B cell (primary cell): ENCODE measurements at regions of chr11 and their contacts with region 1.

Region 1: GRCh38 chr11:14907411-14908213 is 15.6 kb upstream of the CYP2R1 start:
- DNase-seq: peak; percentile 85
- ATAC-seq: peak; percentile 37
- H3K4me3 ChIP-seq: no peak overlapping the region
- H3K4me3 Mint-ChIP-seq: no peak overlapping the region
- H3K27ac ChIP-seq: no peak overlapping the region
- H3K27ac Mint-ChIP-seq: peak overlapping the region; percentile 70
- H3K4me1 ChIP-seq: peaks cover 32 to 44% of the 10 kb centered on the region in 2 donors
- H3K4me1 Mint-ChIP-seq: peaks cover 45% of the 10 kb centered on the region
- H3K27me3 ChIP-seq: peaks cover 0 to 4% (median 0%) of the 10 kb centered on the region in 4 experiments
- H3K27me3 Mint-ChIP-seq: peaks cover 2% of the 10 kb centered on the region
- CTCF ChIP-seq: peak; percentile 81

Region 2: DNA sequence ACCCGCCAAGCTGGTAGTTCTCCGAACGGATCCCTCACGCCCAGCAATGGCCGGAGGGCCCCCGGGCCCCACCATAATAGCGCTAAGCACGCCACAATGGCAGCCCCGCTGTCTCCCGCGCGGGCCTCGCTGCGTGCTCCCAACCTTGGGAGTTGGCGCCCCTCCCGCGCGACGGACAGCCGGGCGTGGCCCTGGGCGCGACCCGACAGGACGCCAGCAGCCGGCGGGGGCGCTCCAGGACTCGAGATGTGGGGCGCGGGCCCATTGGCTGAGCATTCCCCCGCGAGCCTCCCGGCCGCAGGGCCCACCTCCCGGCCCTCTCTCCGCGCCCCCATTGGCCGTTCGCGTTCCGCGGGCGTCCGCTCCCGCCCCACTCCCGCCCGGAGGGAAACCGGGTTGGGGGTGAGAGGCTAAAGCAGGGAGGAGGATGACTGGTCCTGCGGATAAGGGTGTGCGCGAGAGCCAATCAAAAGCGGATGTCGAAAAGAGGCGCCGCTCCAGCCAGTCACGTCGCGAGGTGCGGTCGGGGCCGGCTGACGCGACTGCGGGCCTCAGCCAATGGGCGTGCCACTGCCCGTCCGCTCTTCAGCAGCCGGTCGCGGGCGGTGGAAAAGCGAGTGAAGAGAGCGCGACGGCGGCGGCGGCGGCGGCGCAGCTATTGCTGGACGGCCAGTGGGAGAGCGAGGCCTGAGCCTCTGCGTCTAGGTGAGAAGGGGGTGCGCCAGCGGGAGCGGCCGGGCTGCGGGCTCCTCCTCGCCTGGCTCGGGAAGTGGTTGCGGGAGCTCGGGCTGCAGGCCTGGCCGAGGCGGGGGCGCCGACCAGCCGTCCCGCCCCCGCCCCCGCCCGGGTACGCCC is 1239.3 kb before region 1 on chr11 and contains the start of gene FAR1:
- CTCF ChIA-PET with region 1: no interaction called
- POLR2A ChIA-PET with region 1: no interaction called
- intact Hi-C with region 1: loop called (anchors 5 kb)
- DNase-seq: peak; percentile 98
- ATAC-seq: peak; percentile 87
- H3K4me3 ChIP-seq: peak within 1 kb of the TSS; percentile 69 to 92 (median 80)
- H3K4me3 Mint-ChIP-seq: peak within 1 kb of the TSS; percentile 96
- H3K27ac ChIP-seq: peak within 1 kb of the TSS; percentile 50 to 74
- H3K27ac Mint-ChIP-seq: peak within 1 kb of the TSS; percentile 94
- H3K4me1 ChIP-seq: peaks cover 16 to 24% of the 10 kb centered on the region in 2 donors
- H3K4me1 Mint-ChIP-seq: peaks cover 43% of the 10 kb centered on the region
- H3K27me3 ChIP-seq: peaks cover 0 to 4% (median 1%) of the 10 kb centered on the region in 4 experiments
- H3K27me3 Mint-ChIP-seq: peaks cover 8% of the 10 kb centered on the region
- CTCF ChIP-seq: peak; percentile 78
- total RNA-seq, gene FAR1: 44.7 and 44.8 TPM in 2 replicates

Region 3: GRCh38 chr11:14519917-14520746 is 387.5 kb before region 1 on chr11 and contains the start of gene PSMA1:
- CTCF ChIA-PET with region 1: interaction called, 36 read pairs
- POLR2A ChIA-PET with region 1: no interaction called
- intact Hi-C with region 1: loop called (anchors 1 kb)
- DNase-seq: peak; percentile 94
- ATAC-seq: peak; percentile 93
- H3K4me3 ChIP-seq: peak within 1 kb of the TSS; percentile 69 to 93 (median 89)
- H3K4me3 Mint-ChIP-seq: peak within 1 kb of the TSS; percentile 98
- H3K27ac ChIP-seq: peak within 1 kb of the TSS; percentile 83 to 91
- H3K27ac Mint-ChIP-seq: peak within 1 kb of the TSS; percentile 97
- H3K4me1 ChIP-seq: peaks cover 13 to 18% of the 10 kb centered on the region in 2 donors
- H3K4me1 Mint-ChIP-seq: peaks cover 21% of the 10 kb centered on the region
- H3K27me3 ChIP-seq: no peaks in the 10 kb centered on the region
- H3K27me3 Mint-ChIP-seq: no peaks in the 10 kb centered on the region
- CTCF ChIP-seq: no peak
- total RNA-seq, gene PSMA1: 115 and 123 TPM in 2 replicates

Region 4: GRCh38 chr11:14578541-14578956 is 329.1 kb before region 1 on chr11:
- CTCF ChIA-PET with region 1: interaction called, 24 read pairs
- POLR2A ChIA-PET with region 1: interaction called, 4 read pairs
- intact Hi-C with region 1: loop called (anchors 1 kb)
- DNase-seq: peak; percentile 90
- ATAC-seq: peak; percentile 99
- H3K4me3 ChIP-seq: peak overlapping the region in 1 of 5 experiments; percentile 18
- H3K4me3 Mint-ChIP-seq: peak overlapping the region; percentile 51
- H3K27ac ChIP-seq: peak overlapping the region; percentile 59 to 71
- H3K27ac Mint-ChIP-seq: peak overlapping the region; percentile 85
- H3K4me1 ChIP-seq: peaks cover 13 to 22% of the 10 kb centered on the region in 2 donors
- H3K4me1 Mint-ChIP-seq: peaks cover 37% of the 10 kb centered on the region
- H3K27me3 ChIP-seq: no peaks in the 10 kb centered on the region
- H3K27me3 Mint-ChIP-seq: peaks cover 4% of the 10 kb centered on the region
- CTCF ChIP-seq: no peak

Region 5: DNA sequence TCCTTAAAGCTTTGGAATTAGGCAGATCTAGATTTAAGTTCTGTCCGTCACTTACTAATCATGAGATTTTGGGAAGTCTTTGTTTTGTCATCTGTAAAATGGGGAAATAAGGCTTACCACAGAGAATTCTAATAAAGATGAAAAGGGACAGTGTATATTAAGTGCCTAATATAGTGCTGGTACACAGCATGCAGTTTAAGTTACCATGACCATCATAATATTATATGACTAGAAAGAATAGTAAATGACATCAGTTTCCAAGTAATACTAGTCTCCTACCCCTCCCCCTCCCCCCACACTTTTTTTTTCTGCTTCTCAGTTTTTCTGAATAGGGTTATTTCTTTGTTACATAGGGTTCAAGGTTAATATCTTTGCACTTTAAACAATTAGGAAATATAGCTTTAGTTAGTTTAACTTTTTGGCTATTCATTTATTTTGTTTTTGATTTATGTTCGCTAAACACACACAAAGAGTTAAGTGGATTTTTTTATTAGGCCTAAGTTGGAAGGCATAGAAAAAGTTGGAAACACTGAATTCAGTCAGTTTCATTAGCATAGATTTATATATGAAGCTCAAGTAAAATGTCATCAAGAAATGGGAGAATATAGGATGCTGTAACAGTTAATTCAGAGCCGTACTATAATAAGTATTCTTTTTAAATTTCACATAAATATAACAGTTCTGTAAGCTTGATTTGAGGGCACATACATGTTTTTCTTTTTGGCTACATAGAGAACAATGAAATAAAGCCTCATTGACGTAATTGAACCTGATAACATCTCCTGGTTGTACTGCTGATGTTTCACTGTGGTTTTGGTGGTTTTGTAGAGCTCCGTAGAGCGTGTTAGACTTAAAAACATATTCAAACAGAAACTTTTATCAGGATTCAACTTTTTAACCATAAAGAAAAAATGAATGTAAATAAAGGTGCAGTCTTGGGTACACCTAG is 142.8 kb before region 1 on chr11:
- CTCF ChIA-PET with region 1: interaction called, 33 read pairs
- POLR2A ChIA-PET with region 1: interaction called, 3 read pairs
- intact Hi-C with region 1: loop called (anchors 2 kb)
- DNase-seq: peak; percentile 81
- ATAC-seq: peak; percentile 88
- H3K4me3 ChIP-seq: peak overlapping the region in 1 of 5 experiments; percentile 0
- H3K4me3 Mint-ChIP-seq: peak overlapping the region; percentile 30
- H3K27ac ChIP-seq: peak overlapping the region; percentile 1 to 8
- H3K27ac Mint-ChIP-seq: peak overlapping the region; percentile 7
- H3K4me1 ChIP-seq: peaks cover 17 to 25% of the 10 kb centered on the region in 2 donors
- H3K4me1 Mint-ChIP-seq: peaks cover 18% of the 10 kb centered on the region
- H3K27me3 ChIP-seq: peaks cover 0 to 6% (median 5%) of the 10 kb centered on the region in 4 experiments
- H3K27me3 Mint-ChIP-seq: no peaks in the 10 kb centered on the region
- CTCF ChIP-seq: no peak

Region 6: DNA sequence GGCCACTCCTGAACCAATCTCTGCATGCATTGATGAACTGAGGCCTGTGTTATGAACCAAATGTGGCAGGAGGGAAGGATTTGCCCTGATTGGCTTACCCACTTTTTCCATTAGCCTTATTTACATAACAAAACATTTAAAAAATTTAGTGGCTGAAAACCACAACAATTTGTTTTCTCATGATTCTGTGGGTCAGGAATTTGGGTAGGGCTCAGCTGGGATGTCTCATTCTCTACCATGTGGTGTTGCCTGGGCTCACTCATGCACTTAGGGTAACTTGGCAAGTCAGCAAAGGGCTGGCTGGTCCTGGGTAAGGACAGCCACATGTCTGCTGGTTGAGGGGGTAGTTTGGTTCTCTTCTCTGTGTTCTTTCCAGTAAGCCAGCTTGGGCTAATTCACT is 19.5 kb after region 1 on chr11:
- CTCF ChIA-PET with region 1: interaction called, 55 read pairs
- POLR2A ChIA-PET with region 1: no interaction called
- intact Hi-C with region 1: no loop called
- DNase-seq: no peak
- ATAC-seq: no peak
- H3K4me3 ChIP-seq: no peak overlapping the region
- H3K4me3 Mint-ChIP-seq: no peak overlapping the region
- H3K27ac ChIP-seq: no peak overlapping the region
- H3K27ac Mint-ChIP-seq: no peak overlapping the region
- H3K4me1 ChIP-seq: no peaks in the 10 kb centered on the region
- H3K4me1 Mint-ChIP-seq: no peaks in the 10 kb centered on the region
- H3K27me3 ChIP-seq: peaks cover 0 to 14% (median 8%) of the 10 kb centered on the region in 4 experiments
- H3K27me3 Mint-ChIP-seq: peaks cover 24% of the 10 kb centered on the region
- CTCF ChIP-seq: no peak

Region 7: GRCh38 chr11:15101072-15101709 is 193.6 kb after region 1 on chr11:
- CTCF ChIA-PET with region 1: interaction called, 127 read pairs
- POLR2A ChIA-PET with region 1: no interaction called
- intact Hi-C with region 1: loop called (anchors 2 kb)
- DNase-seq: peak; percentile 72
- ATAC-seq: peak; percentile 78
- H3K4me3 ChIP-seq: no peak overlapping the region
- H3K4me3 Mint-ChIP-seq: no peak overlapping the region
- H3K27ac ChIP-seq: no peak overlapping the region
- H3K27ac Mint-ChIP-seq: no peak overlapping the region
- H3K4me1 ChIP-seq: peaks cover under 1 to 9% of the 10 kb centered on the region in 2 donors
- H3K4me1 Mint-ChIP-seq: peaks cover 10% of the 10 kb centered on the region
- H3K27me3 ChIP-seq: peaks cover 0 to 4% (median 0%) of the 10 kb centered on the region in 4 experiments
- H3K27me3 Mint-ChIP-seq: peaks cover 26% of the 10 kb centered on the region
- CTCF ChIP-seq: peak; percentile 98